GM23248 (cell line): ENCODE measurements at regions of chr11 and their contacts with region 1.

Region 1: GRCh38 chr11:1694064-1694845 is 2.7 kb upstream of the KRTAP5-6 start:
- DNase-seq: peak; percentile 86
- H3K4me3 ChIP-seq: no peak overlapping the region
- H3K27ac ChIP-seq: no peak overlapping the region
- H3K4me1 ChIP-seq: no peaks in the 10 kb centered on the region
- H3K27me3 ChIP-seq: peaks cover 25% of the 10 kb centered on the region

Region 2: GRCh38 chr11:789943-790342 is 904.3 kb before region 1 on chr11 and contains the start of gene CEND1:
- in situ Hi-C with region 1: no loop called
- DNase-seq: peak; percentile 82
- H3K4me3 ChIP-seq: peak within 1 kb of the TSS; percentile 45; the same call in 1 of the 2 replicates
- H3K27ac ChIP-seq: no peak within 1 kb of the TSS
- H3K4me1 ChIP-seq: no peaks in the 10 kb centered on the region
- H3K27me3 ChIP-seq: no peaks in the 10 kb centered on the region
- total RNA-seq, gene CEND1: 2.1 and 2.8 TPM in 2 replicates

Region 3: DNA sequence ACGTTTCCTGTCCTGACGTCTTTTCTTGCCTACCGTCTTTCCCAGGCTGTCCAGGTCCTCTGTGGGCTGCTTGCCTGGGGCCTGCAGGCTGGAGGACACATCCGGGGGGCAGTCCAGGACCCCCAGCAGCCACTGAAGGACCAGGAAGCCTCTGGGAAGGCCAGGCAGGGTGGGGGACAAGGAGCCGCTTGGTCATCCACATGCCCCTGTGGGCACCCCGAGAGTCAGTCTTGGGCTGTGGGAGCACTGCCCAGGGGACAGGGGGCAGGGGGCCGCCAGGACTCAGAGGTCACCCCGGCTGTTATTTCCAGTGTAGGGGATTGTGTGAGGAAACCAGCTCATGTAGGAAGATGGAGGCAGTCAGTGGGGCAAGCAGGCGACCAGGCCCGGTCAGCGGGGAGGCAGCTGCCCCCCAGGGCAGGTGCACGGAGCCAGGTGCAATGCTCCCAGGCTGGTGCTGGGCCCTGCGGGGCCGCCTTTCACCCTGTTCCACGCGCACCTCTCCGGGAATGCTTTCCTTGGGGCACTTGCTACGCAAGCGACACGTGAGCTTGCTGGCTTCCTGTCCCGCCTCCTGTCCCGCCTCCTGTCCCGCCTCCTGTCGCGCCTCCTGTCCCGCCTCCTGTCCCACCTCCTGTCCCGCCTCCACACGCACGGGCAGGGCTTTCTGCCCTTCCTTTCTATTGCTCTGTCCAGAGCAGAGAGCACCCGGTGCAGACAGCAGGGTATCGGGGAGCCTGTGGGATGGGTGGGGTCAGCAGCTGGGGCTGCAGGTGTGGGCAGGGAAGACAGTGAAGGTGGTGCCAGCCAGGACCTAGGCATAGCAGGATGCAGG is 431.9 kb before region 1 on chr11:
- in situ Hi-C with region 1: no loop called
- DNase-seq: peak; percentile 96
- H3K4me3 ChIP-seq: peak overlapping the region; percentile 70
- H3K27ac ChIP-seq: no peak overlapping the region
- H3K4me1 ChIP-seq: no peaks in the 10 kb centered on the region
- H3K27me3 ChIP-seq: no peaks in the 10 kb centered on the region

Region 4: DNA sequence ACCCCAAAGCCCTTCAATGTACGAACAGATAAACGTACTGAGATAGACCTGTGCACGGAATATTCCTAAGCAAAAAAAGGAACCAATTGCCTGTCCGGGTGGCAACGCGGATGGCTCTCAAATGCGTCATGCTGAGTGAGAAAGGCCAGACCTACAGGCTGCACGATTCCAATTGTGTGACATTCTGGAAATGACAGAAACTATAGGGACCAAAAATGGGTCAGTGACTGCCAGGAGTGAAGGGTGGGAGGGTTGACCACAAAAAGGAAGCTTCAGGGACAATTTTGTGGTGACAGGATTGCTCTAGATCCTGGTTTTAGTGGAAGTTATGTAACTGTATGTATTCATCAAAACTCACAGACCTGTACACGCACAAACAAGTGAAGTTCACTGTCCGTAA is 116.5 kb after region 1 on chr11:
- in situ Hi-C with region 1: loop called (anchors 10 kb)
- DNase-seq: no peak
- H3K4me3 ChIP-seq: no peak overlapping the region
- H3K27ac ChIP-seq: no peak overlapping the region
- H3K4me1 ChIP-seq: no peaks in the 10 kb centered on the region
- H3K27me3 ChIP-seq: peaks cover 72% of the 10 kb centered on the region